Transverse colon (tissue), 4 donors: ENCODE measurements at regions of chr2 and their contacts with region 1.

Region 1: DNA sequence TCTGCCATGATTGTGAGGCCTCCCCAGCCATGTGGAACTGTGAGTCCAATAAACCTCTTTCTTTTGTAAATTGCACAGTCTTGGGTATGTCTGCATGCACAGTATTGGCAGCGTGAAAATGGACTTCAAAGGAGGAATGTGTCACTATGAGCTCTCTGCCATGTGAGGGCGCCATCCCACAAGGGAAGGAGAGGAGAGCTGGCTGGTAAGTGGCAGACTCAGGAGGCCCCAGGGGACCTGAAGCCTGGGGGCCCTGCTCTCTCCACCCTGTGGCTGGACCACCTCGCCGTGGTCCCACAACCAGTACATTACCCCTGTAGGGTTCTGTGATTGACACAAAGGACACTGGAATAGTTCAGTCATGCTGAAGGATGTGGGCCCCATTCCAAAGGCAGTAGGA is 122.1 kb downstream of the RPIA start:
- DNase-seq: no peak
- H3K4me3 ChIP-seq: no peak overlapping the region
- H3K27ac ChIP-seq: no peak overlapping the region
- H3K4me1 ChIP-seq: no peaks in the 10 kb centered on the region
- H3K27me3 ChIP-seq: no peaks in the 10 kb centered on the region
- CTCF ChIP-seq: no peak
- EP300 ChIP-seq: no peak
- POLR2A ChIP-seq: no peak

Region 2: GRCh38 chr2:88885275-88885674 is 71.7 kb after region 1 on chr2:
- in situ Hi-C with region 1: no loop called
- intact Hi-C with region 1: loop called (anchors 2 kb)
- DNase-seq: no peak
- H3K4me3 ChIP-seq: no peak overlapping the region
- H3K27ac ChIP-seq: no peak overlapping the region
- H3K4me1 ChIP-seq: peaks cover 0 to 3% (median 0%) of the 10 kb centered on the region in 4 donors
- H3K27me3 ChIP-seq: no peaks in the 10 kb centered on the region
- CTCF ChIP-seq: no peak
- EP300 ChIP-seq: no peak
- POLR2A ChIP-seq: no peak